ENCODE measurements at regions of chr11 and their contacts with region 1.

Region 1: DNA sequence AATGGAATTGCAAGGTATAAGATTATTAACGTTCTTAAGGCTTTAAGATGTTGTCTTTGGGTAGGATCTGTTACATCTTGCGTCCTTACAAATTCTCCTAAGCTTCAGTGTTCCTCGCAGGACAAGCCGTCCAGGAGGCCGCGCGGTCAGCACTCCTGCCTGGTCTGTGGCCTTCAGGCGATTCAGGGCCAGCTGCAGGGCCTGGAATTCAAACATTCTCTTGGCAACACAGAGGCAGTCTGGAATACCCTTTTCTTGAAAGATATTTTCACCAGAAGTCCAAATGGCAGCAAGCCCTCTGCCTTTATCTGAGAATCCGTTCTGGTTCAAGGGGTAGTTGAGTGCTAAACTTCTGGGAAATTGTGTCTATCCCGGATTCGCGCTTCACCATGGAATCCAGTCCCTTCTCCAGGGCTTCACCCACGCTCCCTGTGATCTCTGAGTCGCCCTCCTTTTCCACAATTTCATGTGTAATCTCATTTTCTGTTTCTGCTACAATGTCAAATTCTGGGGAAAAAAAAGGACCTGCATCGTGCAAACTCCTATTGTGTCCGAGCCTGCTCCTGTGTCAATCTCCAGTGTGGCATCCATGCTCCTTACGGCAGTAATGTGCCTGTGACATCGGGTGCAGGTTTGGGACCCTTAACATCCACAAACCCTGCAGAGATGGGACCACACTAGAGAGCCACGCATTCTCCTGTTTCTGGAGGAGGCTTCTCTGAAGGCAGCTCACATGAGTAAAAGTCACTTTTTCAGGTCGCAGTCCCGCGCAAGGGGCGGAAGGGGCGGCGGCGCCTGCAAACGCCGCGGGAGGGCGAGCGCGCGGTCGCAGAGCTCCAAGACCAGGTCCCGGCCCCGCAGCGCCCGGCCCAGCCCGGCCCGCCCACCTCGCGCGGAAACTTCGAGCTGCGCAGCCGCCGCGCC is 25.4 kb upstream of the SORL1 start:
- DNase-seq: peak; percentile 30 to 56
- ATAC-seq: peak; percentile 79 to 92 (median 84)
- H3K4me3 ChIP-seq: peak overlapping the region in 9 of 10 donors; percentile 16 to 41 (median 33)
- H3K27ac ChIP-seq: peak overlapping the region in 3 of 10 donors; percentile 25 to 38 (median 28)
- H3K4me1 ChIP-seq: peaks cover 0 to 29% (median 0%) of the 10 kb centered on the region in 9 donors
- H3K27me3 ChIP-seq: peaks cover 0 to 5% (median 0%) of the 10 kb centered on the region in 7 donors
- CTCF ChIP-seq: peak in 5 of 9 donors; percentile 24 to 48 (median 41)

Region 2: GRCh38 chr11:121406291-121406690 is 20.4 kb before region 1 on chr11:
- intact Hi-C with region 1: no loop called
- DNase-seq: no peak
- ATAC-seq: no peak
- H3K4me3 ChIP-seq: no peak overlapping the region
- H3K27ac ChIP-seq: peak overlapping the region in 1 of 10 donors; percentile 68
- H3K4me1 ChIP-seq: peaks cover 0 to 8% (median 0%) of the 10 kb centered on the region in 9 donors
- H3K27me3 ChIP-seq: no peaks in the 10 kb centered on the region
- CTCF ChIP-seq: no peak

Region 3: GRCh38 chr11:121464352-121464946 is 37.7 kb after region 1 on chr11:
- intact Hi-C with region 1: no loop called
- DNase-seq: peak; percentile 57 to 63
- ATAC-seq: peak; percentile 77 to 91 (median 89)
- H3K4me3 ChIP-seq: no peak overlapping the region
- H3K27ac ChIP-seq: peak overlapping the region in 4 of 10 donors; percentile 28 to 71 (median 44)
- H3K4me1 ChIP-seq: peaks cover 3 to 64% (median 26%) of the 10 kb centered on the region in 9 donors
- H3K27me3 ChIP-seq: peaks cover 0 to 11% (median 0%) of the 10 kb centered on the region in 7 donors
- CTCF ChIP-seq: no peak

Region 4: DNA sequence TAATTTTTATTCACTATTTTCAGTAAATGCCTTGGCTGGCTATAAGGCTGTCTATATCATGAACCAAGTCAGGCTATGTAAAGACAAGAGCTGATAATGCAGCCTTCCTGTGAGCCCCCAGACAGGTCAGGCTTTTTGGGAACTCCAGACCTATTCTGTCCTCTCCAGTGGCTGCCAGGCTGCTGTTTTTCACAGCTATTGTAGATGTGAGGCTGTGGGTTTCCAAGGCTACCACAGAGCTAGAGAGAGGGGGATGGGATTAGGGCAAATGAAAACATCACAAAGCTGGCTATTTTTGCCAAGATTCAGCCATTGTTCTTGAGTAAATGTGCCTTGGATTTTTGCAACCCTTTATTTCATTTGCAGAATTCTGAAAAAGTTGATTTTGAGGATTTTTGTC is 81.7 kb after region 1 on chr11:
- intact Hi-C with region 1: no loop called
- DNase-seq: no peak
- ATAC-seq: no peak
- H3K4me3 ChIP-seq: no peak overlapping the region
- H3K27ac ChIP-seq: no peak overlapping the region
- H3K4me1 ChIP-seq: peaks cover 0 to 1% (median 0%) of the 10 kb centered on the region in 9 donors
- H3K27me3 ChIP-seq: no peaks in the 10 kb centered on the region
- CTCF ChIP-seq: no peak

Region 5: GRCh38 chr11:121520243-121521144 is 93.8 kb after region 1 on chr11:
- intact Hi-C with region 1: no loop called
- DNase-seq: no peak
- ATAC-seq: peak in 3 of 8 donors; percentile 49 to 62 (median 51)
- H3K4me3 ChIP-seq: no peak overlapping the region
- H3K27ac ChIP-seq: no peak overlapping the region
- H3K4me1 ChIP-seq: peaks cover 0 to 29% (median 11%) of the 10 kb centered on the region in 9 donors
- H3K27me3 ChIP-seq: no peaks in the 10 kb centered on the region
- CTCF ChIP-seq: no peak

Region 6: GRCh38 chr11:121591405-121592033 is 164.8 kb after region 1 on chr11:
- intact Hi-C with region 1: loop called in 1 of 10 experiments (anchors 10 kb)
- DNase-seq: peak in 1 of 2 donors; percentile 76
- ATAC-seq: peak in 7 of 8 donors; percentile 74 to 85 (median 82)
- H3K4me3 ChIP-seq: no peak overlapping the region
- H3K27ac ChIP-seq: no peak overlapping the region
- H3K4me1 ChIP-seq: peaks cover 0 to 13% (median 0%) of the 10 kb centered on the region in 9 donors
- H3K27me3 ChIP-seq: no peaks in the 10 kb centered on the region
- CTCF ChIP-seq: peak; percentile 73 to 90 (median 85)